ENCODE measurements at regions of chr1 and their contacts with region 1.

Region 1: DNA sequence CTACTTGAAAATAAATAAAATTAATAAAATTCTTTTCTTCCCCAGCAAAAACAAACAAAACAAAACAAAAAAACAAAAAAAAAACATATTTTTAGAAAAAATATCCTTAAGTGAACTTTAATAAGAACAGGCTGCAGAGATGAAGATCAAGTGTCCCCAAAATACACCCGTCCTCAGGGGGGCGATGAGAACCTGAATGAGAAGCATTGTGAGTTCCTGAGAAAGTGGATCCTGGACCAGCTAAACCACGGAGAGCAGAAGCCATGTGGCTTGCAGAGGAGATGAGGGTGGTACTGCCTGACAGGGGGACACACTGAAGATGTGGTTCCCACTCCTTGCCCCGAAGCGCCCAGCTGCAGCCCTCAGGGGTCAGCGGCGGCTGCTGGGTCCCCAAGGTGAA is 89.3 kb downstream of the ITPKB start:
- DNase-seq: peak; percentile 64
- H3K4me3 Mint-ChIP-seq: no peak overlapping the region
- H3K27ac Mint-ChIP-seq: peak overlapping the region; percentile 46
- H3K4me1 Mint-ChIP-seq: peaks cover 40% of the 10 kb centered on the region
- H3K27me3 Mint-ChIP-seq: no peaks in the 10 kb centered on the region

Region 2: GRCh38 chr1:226662642-226663326 is 13.0 kb after region 1 on chr1:
- CTCF ChIA-PET with region 1: interaction called, 10 read pairs
- DNase-seq: peak; percentile 84
- H3K4me3 Mint-ChIP-seq: peak overlapping the region; percentile 34
- H3K27ac Mint-ChIP-seq: peak overlapping the region; percentile 92
- H3K4me1 Mint-ChIP-seq: peaks cover 88% of the 10 kb centered on the region
- H3K27me3 Mint-ChIP-seq: no peaks in the 10 kb centered on the region

Region 3: DNA sequence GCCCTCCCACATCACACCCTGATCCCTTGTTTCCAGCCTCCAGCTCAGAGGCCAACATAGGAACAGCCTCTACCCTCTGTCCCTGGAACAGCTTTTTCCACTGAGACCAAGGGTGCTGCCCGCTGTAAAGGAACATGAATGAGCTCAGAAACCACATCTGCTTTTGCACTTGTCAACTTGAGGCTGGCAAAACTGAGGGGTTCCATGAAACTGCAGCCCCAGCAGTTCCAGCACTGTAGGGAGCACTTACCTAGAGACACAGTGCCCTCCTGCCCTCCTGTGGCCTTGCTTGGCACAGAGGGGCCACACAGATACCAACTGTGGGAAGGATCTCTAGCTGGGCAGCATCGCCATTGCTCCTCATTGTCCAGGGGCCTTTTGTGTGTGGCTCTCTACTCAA is 37.6 kb after region 1 on chr1:
- CTCF ChIA-PET with region 1: interaction called, 11 read pairs
- DNase-seq: peak; percentile 47
- H3K4me3 Mint-ChIP-seq: no peak overlapping the region
- H3K27ac Mint-ChIP-seq: no peak overlapping the region
- H3K4me1 Mint-ChIP-seq: peaks cover 98% of the 10 kb centered on the region
- H3K27me3 Mint-ChIP-seq: no peaks in the 10 kb centered on the region

Region 4: DNA sequence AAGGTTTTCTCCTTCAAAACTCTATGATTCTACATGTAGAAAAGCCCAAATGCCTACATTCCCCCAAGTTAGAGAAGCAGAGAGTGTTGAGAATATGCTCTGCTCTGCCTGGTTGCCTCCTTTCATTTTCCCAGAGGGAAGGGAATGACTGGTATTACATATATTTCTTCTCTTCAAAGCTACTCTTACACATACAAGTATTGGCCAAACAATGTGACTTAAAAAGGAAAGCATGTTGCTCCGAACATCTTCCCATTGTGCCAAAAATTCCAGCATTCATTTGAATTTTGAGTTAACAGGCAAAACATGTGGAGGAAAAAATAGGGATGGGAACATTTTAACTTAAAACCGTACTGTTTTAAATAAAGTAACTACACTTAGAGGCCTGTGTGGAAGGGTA is 415.5 kb after region 1 on chr1:
- CTCF ChIA-PET with region 1: no interaction called
- DNase-seq: no peak
- H3K4me3 Mint-ChIP-seq: no peak overlapping the region
- H3K27ac Mint-ChIP-seq: no peak overlapping the region
- H3K4me1 Mint-ChIP-seq: no peaks in the 10 kb centered on the region
- H3K27me3 Mint-ChIP-seq: no peaks in the 10 kb centered on the region

Measured in activated naive CD4-positive, alpha-beta T cell treated with anti-CD3 and anti-CD28 coated beads, Interleukin-2, amount 10 ng/mL, durations not matched to agents 7 days and 5 days (primary cell).